HEK293 (cell line): ENCODE measurements at regions of chr9 and their contacts with region 1.

Region 1: DNA sequence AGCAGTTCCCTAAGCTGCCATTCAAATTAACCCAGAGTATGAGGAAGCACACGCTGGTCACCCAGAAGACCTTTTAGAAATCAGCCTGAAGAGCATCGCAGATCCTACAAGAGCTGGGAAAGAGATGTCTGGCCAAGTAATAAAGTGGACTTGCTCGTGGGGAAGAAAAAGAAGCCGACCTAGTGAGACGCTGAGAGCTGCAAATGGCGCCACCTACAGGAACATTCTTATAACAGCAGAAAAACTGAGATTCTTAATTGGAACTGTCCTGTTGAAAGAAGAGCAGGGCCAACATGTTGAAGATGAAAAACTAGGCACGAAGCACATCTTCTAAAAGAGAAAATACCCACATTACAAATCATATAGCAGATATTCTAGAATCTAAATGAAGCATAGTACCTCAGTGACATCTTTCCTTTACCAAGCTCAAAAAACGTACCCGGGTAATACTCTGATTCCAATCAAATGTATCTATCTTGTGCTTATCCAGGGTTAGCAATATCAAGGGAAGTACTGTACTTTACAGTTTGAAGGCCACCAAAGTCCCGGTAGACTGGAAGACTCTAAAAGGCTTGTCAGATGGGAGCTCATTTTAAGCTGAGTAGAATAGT is 3.9 kb upstream of the GNAQ start:
- H3K4me3 ChIP-seq: no peak overlapping the region
- H3K27ac ChIP-seq: no peak overlapping the region
- H3K4me1 ChIP-seq: no peaks in the 10 kb centered on the region
- CTCF ChIP-seq: no peak

Region 2: GRCh38 chr9:77841739-77842386 is 193.6 kb before region 1 on chr9:
- CTCF ChIA-PET with region 1: interaction called, 12 read pairs
- POLR2A ChIA-PET with region 1: no interaction called
- H3K4me3 ChIP-seq: no peak overlapping the region
- H3K27ac ChIP-seq: no peak overlapping the region
- H3K4me1 ChIP-seq: peaks cover 3% of the 10 kb centered on the region; the same call in 1 of the 2 replicates
- CTCF ChIP-seq: no peak

Region 3: DNA sequence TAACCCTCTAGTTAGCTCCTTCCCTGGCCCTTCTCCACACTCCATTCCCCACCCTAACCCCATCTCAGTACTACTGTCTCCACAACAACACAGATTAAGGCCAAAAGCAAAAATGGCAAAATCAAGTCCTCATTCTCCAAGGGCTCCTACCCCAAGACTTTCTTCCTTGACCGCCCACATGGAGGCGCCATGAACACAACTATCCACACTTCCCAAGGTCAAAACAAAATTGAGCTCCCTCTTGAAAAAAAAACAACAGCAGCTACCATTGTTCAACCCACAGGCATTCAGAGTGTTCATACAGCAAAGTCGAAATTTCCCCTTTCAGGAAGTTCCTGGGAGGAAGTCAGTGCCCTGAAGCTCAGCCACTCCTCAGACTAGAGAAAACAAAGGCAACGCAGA is 58.3 kb before region 1 on chr9:
- CTCF ChIA-PET with region 1: interaction called, 94 read pairs
- POLR2A ChIA-PET with region 1: interaction called, 10 read pairs
- H3K4me3 ChIP-seq: no peak overlapping the region
- H3K27ac ChIP-seq: no peak overlapping the region
- H3K4me1 ChIP-seq: peaks cover 12% of the 10 kb centered on the region
- CTCF ChIP-seq: peak; percentile 48

Region 4: GRCh38 chr9:78021697-78022096 is 13.8 kb before region 1 on chr9:
- CTCF ChIA-PET with region 1: interaction called, 17 read pairs
- POLR2A ChIA-PET with region 1: no interaction called
- H3K4me3 ChIP-seq: no peak overlapping the region
- H3K27ac ChIP-seq: no peak overlapping the region
- H3K4me1 ChIP-seq: peaks cover 12% of the 10 kb centered on the region
- CTCF ChIP-seq: peak; percentile 50; the same call in 1 of the 2 replicates

Region 5: DNA sequence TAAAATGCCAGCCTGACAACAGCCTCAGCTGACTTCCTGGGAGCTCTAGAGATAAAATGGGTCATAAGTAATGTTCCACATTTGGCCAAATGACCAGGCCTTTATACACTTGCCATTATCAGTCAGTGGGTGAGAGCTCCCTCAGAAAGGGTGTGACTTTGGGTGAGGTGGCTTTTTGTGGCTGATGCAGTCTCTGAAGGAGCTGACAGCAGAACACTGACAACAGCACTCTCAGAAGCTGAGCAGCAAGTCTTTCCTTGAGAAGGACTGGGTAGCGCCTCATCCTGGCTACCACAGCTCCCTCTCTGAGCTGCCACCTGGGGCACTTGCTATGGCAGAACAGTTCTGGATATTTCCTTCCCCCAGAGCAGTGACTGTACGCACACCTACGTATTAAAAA is 18.1 kb after region 1 on chr9:
- CTCF ChIA-PET with region 1: interaction called, 23 read pairs
- POLR2A ChIA-PET with region 1: no interaction called
- H3K4me3 ChIP-seq: no peak overlapping the region
- H3K27ac ChIP-seq: no peak overlapping the region
- H3K4me1 ChIP-seq: no peaks in the 10 kb centered on the region
- CTCF ChIP-seq: no peak

Region 6: DNA sequence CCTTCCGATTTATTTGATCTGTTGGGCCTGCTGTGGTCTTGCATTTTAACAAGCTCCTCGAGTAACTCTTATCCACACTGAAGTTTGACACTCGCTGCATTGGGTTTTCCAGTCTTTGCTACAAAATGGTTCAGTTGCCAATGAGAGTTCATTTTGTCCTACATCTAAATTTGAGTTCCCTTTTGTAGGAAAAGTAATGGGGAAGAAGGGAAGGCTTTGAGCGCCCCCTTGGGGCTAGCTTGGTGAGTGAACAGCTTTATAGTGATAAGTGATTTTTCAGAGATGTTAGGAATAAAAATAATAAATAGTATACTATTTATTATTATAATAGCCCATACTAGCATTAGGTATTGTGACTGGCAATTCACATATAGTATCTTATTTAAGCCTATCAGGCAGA is 86.0 kb after region 1 on chr9:
- CTCF ChIA-PET with region 1: interaction called, 10 read pairs
- POLR2A ChIA-PET with region 1: no interaction called
- H3K4me3 ChIP-seq: no peak overlapping the region
- H3K27ac ChIP-seq: no peak overlapping the region
- H3K4me1 ChIP-seq: no peaks in the 10 kb centered on the region
- CTCF ChIP-seq: no peak